A549 (cell line): ENCODE measurements at regions of chr5 and their contacts with region 1.

Region 1: DNA sequence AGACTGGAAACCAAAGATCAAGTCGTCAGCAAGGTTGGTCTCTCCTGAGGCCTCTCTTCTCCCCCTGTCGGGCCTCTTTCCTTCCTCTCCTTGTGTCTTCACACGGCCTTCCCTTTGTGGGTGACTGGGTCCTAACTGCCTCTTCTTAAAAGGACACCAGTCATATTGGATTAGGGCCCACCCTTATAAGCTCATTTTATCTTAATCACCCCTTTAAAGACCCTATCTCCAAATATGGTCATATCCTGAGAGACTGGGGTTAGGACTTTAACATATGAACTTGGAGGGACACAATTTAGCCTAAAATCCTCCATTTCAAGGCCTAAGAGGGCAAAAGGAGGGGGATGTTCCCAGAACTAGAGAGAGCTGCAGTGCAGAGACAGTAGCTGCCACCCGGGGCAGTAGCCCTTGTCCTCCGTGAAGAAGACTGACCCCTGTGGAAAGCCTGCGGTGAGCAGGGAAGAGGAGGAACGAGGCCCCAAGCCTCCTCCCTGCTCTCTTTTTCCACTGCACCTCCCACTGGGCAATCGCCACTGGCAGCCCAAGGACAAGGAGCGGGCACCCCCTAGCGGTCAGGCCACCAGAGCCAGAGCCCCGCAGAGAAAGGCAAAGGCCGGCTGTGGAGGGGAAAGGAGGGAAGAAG is 34.9 kb downstream of the CFAP90 start:
- DNase-seq: peak; percentile 67 to 75
- ATAC-seq: peak; percentile 94 to 99
- H3K4me3 ChIP-seq: no peak overlapping the region
- H3K27ac ChIP-seq: no peak overlapping the region
- H3K4me1 ChIP-seq: no peaks in the 10 kb centered on the region
- CTCF ChIP-seq: peak; percentile 68
- EP300 ChIP-seq: no peak
- POLR2A ChIP-seq: no peak
- RAD21 ChIP-seq: peak; percentile 74 to 76

Region 2: GRCh38 chr5:7488734-7489133 is 327.3 kb before region 1 on chr5:
- CTCF ChIA-PET with region 1: no interaction called
- POLR2A ChIA-PET with region 1: no interaction called
- DNase-seq: no peak
- ATAC-seq: no peak
- H3K4me3 ChIP-seq: no peak overlapping the region
- H3K27ac ChIP-seq: no peak overlapping the region
- H3K4me1 ChIP-seq: no peaks in the 10 kb centered on the region
- CTCF ChIP-seq: no peak
- EP300 ChIP-seq: no peak
- POLR2A ChIP-seq: no peak
- RAD21 ChIP-seq: no peak

Region 3: GRCh38 chr5:7754992-7755596 is 60.9 kb before region 1 on chr5:
- CTCF ChIA-PET with region 1: interaction called, 14 read pairs
- POLR2A ChIA-PET with region 1: no interaction called
- DNase-seq: peak; percentile 28 to 72
- ATAC-seq: peak; percentile 90 to 100
- H3K4me3 ChIP-seq: no peak overlapping the region
- H3K27ac ChIP-seq: no peak overlapping the region
- H3K4me1 ChIP-seq: no peaks in the 10 kb centered on the region
- CTCF ChIP-seq: peak; percentile 54
- EP300 ChIP-seq: no peak
- POLR2A ChIP-seq: no peak
- RAD21 ChIP-seq: peak; percentile 58 to 73

Region 4: DNA sequence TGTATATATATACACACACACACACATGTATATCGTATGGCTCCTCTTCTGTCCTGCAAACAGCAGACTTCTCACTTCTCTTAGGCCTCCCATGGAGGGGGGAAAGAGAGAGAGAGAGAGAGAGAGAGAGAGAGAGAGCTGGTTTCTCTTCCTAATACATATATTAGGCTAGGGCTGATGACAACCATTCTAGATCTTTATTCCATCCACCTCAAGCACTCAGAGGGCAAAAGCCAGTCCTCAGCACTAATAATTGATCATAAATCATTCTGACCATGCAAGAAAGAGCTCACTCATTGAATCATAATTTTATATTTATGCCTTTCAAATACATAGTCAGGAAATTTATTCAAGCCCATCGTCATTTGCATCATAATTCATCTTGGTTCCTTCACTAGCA is 12.1 kb before region 1 on chr5:
- CTCF ChIA-PET with region 1: interaction called, 10 read pairs
- POLR2A ChIA-PET with region 1: no interaction called
- DNase-seq: no peak
- ATAC-seq: no peak
- H3K4me3 ChIP-seq: no peak overlapping the region
- H3K27ac ChIP-seq: no peak overlapping the region
- H3K4me1 ChIP-seq: no peaks in the 10 kb centered on the region
- CTCF ChIP-seq: no peak
- EP300 ChIP-seq: no peak
- POLR2A ChIP-seq: no peak
- RAD21 ChIP-seq: no peak

Region 5: GRCh38 chr5:7827610-7828009 is 11.6 kb after region 1 on chr5:
- CTCF ChIA-PET with region 1: interaction called, 16 read pairs
- POLR2A ChIA-PET with region 1: no interaction called
- DNase-seq: no peak
- ATAC-seq: 0 out of 6 replicates have a peak, but pooled peaks of 1 of the 2 experiments have one; percentile 19
- H3K4me3 ChIP-seq: no peak overlapping the region
- H3K27ac ChIP-seq: no peak overlapping the region
- H3K4me1 ChIP-seq: no peaks in the 10 kb centered on the region
- CTCF ChIP-seq: no peak
- EP300 ChIP-seq: no peak
- POLR2A ChIP-seq: no peak
- RAD21 ChIP-seq: no peak